ENCODE measurements at regions of chr22 and their contacts with region 1.

Region 1: GRCh38 chr22:26756675-26757293 is 99.4 kb downstream of the MIAT start:
- DNase-seq: peak; percentile 78

Region 2: GRCh38 chr22:26679003-26679629 is 77.7 kb before region 1 on chr22:
- intact Hi-C with region 1: loop called (anchors 5 kb)
- DNase-seq: peak; percentile 86

Region 3: DNA sequence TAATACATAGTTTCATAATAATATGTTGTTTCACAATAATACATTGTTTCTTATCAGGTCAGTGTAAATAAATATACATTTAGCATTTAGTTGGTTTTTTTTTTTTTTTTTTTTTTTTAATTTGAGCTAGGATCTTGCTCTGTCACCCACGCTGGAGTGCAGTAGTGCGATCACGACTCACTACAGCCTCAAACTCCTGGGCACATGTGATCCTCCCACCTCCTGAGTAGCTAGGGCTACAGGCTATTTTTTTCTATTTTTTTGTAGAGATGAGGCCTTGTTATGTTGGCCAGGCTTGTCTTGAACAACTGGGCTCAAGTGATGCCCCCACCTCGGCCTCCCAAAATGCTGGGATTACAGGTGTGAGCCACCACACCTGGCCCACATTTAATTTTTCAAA is 55.9 kb before region 1 on chr22:
- intact Hi-C with region 1: no loop called
- DNase-seq: no peak

Region 4: DNA sequence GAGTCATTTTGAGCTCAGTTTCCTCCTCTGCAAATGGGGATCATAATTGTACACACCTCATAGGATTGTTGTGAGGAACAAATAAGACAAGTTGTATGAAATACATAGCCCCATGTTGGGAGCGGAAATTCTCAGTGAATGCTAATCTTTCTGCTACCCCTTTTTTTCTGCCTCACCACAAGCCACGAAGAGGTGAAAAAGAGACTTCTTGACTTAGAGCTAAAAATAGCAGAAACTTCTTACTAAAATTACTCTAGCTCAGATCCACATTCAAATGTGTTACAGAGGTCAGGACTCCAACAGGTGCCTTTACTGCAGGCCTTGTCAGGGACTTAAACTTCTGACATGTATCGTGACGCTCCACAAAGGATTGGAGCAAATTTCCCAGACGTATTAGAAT is 29.1 kb after region 1 on chr22:
- intact Hi-C with region 1: no loop called
- DNase-seq: no peak

Region 5: GRCh38 chr22:26922806-26923205 is 166.0 kb after region 1 on chr22:
- intact Hi-C with region 1: no loop called
- DNase-seq: no peak

Region 6: GRCh38 chr22:27113211-27113635 is 356.4 kb after region 1 on chr22:
- intact Hi-C with region 1: no loop called
- DNase-seq: no peak

Region 7: DNA sequence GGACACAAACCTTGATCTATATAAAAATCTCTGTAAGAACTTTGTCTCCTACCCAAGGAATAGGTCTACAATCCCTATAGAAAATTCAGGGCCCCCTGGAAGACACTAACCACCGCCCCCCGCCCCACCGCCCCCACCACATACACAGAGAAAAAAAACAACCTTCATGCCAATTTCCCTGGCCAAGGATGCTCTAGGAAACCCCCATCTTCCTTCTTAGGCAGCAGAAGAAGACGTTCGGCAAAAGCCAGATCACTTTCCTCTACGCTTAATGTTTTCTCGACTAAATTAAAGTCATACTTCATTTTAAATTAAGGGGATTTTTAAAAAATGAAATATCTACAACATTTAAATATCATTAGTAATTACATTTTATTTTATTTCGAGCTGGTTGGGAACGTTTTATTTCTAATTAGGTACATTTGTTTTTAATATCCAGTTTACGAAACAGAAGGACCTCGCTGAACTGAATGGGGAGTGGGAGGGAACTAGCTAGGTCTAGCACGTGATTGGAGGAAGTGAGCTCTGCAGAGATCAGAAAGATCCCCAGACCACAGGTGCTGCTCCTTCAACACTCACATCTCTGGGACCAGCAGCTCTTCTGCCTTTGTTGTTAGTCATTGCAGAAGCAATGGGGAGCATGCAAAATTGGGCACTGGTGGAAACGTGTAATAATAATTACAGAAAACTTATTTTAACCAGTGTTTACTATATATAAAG is 572.5 kb after region 1 on chr22:
- intact Hi-C with region 1: loop called (anchors 10 kb)
- DNase-seq: no peak

Region 8: DNA sequence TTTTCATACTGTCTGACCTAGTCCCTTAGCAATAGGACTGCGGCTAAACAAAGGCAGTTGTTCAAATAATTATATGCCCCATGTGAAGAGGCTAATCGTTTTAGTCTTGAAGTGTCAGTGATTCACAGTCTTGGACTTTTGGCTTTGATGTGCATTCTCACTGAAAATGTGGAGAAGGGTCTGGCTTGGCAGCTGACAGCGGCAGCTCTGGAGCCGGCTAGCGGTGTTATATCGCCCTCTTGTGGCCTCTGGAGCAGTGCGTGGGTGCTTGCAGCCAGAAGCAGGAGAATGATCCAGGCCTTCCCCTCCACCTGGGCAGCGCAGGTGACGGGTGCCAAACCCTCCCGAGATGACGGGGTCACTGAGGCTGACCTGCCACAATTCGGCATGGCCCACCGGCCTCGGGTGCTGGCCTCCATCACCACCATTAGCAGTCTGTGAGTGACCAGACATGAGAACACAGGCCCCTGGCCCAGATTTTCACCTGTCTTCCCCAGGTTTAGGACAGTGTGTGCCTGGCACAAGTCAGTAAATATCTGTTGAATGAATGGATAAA is 1252.6 kb after region 1 on chr22:
- intact Hi-C with region 1: loop called (anchors 2 kb)
- DNase-seq: peak; percentile 83

Measured in cardiac septum (tissue), 1 donor.